Caco-2 (cell line): ENCODE measurements at regions of chr14 and their contacts with region 1.

Region 1: GRCh38 chr14:22955702-22956569 is 954 bp downstream of the HAUS4 start:
- DNase-seq: no peak
- H3K4me3 ChIP-seq: peak overlapping the region; percentile 58
- H3K4me3 Mint-ChIP-seq: peak overlapping the region; percentile 94
- H3K27ac Mint-ChIP-seq: peak overlapping the region; percentile 96
- H3K4me1 ChIP-seq: peaks cover 18% of the 10 kb centered on the region; the same call in 1 of the 2 replicates
- H3K4me1 Mint-ChIP-seq: peaks cover 25% of the 10 kb centered on the region
- H3K27me3 ChIP-seq: no peaks in the 10 kb centered on the region
- H3K27me3 Mint-ChIP-seq: no peaks in the 10 kb centered on the region
- CTCF ChIP-seq: no peak

Region 2: DNA sequence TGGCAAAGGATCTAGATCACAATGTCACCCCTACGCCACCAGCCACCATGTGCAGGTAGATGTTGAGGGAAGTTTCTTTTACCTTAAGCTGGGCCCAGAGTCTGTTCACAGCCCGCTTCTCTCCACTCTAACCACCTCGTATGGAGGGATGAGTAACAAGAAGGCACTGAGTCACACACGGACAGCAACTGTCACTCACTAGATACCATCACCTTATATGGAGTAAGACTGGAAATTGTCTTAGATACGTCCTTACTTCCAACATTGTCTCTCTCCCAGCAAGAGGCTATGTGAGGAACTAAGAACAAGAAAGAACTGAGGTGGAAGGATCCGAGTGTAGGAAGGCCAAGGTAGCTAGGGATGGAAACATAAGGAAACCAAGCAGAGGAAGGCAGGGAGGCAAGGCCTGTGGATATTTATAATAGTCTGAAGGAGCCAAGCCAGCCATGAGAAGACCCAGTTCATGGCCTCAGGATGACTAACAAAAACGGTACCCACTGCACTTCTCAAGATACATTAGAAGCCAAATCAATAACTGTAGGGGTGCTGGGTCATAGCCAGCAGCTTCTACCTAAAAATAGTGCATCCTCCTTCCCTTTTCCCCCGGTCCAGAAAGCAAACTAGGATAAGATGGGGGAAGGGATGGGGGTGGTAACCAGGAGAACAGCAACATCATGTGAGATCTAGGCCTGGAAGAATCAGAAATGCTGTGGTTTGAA is 57.4 kb before region 1 on chr14:
- CTCF ChIA-PET with region 1: no interaction called
- POLR2A ChIA-PET with region 1: no interaction called
- intact Hi-C with region 1: no loop called
- DNase-seq: no peak
- H3K4me3 ChIP-seq: no peak overlapping the region
- H3K4me3 Mint-ChIP-seq: no peak overlapping the region
- H3K27ac Mint-ChIP-seq: no peak overlapping the region
- H3K4me1 ChIP-seq: 0 out of 2 replicates have a peak, but pooled peaks cover 7% of the 10 kb centered on the region
- H3K4me1 Mint-ChIP-seq: no peaks in the 10 kb centered on the region
- H3K27me3 ChIP-seq: no peaks in the 10 kb centered on the region
- H3K27me3 Mint-ChIP-seq: no peaks in the 10 kb centered on the region
- CTCF ChIP-seq: no peak

Region 3: DNA sequence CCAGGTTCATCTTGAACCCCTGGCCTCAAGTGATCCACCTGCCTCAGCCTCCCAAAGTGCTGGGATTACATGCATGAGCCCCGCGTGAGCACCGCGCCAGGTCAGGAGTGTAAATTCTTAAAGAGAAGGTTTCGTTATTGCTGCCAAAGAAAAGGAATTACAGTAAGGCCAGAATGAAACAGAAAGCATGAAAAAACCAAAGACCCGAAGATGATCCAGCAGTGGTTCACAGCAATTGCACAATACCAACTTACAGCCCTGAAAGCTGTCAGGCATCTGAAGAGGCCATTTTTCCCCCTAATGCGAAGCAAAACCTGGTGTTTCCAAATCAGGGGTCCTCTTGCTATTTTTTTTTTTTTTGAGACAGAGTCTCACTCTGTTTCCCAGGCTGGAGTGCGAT is 47.3 kb before region 1 on chr14:
- CTCF ChIA-PET with region 1: no interaction called
- POLR2A ChIA-PET with region 1: no interaction called
- intact Hi-C with region 1: no loop called
- DNase-seq: no peak
- H3K4me3 ChIP-seq: no peak overlapping the region
- H3K4me3 Mint-ChIP-seq: no peak overlapping the region
- H3K27ac Mint-ChIP-seq: no peak overlapping the region
- H3K4me1 ChIP-seq: no peaks in the 10 kb centered on the region
- H3K4me1 Mint-ChIP-seq: no peaks in the 10 kb centered on the region
- H3K27me3 ChIP-seq: no peaks in the 10 kb centered on the region
- H3K27me3 Mint-ChIP-seq: no peaks in the 10 kb centered on the region
- CTCF ChIP-seq: no peak

Region 4: DNA sequence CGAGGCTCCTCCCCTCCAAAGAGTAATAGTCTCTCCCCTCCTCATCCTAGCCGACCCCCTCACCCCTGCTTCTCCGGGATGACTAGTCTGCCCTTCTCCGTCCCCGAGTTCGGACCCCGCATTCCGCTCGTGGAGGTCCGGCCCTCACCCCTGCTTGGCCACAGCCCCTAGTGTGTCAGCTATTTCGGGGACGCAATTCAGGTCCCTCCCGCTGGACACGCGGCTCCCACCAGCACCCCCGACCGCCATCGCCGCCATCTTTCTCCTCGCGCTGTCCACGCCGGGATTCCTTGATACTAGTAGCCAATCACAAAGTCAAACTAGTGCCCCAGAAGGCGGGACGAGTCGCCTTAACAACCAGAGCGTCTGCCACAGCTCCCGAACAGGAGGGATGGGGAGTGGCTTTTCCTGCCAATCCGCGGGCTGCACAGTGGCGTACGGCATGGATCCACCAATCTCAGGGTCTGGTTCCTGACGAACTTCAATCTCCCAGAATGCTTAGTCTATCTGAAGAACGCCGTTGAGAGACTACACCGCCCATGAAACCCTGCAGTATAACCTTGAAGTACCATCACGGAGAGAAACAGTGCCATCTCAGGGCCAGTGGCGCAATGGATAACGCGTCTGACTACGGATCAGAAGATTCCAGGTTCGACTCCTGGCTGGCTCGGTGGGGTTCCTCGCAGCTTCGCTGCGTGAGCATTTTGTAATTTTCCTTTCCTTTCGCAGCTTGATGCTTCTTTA is 26.7 kb before region 1 on chr14 and contains the start of gene PRMT5:
- CTCF ChIA-PET with region 1: interaction called, 19 read pairs
- POLR2A ChIA-PET with region 1: interaction called, 21 read pairs
- intact Hi-C with region 1: loop called (anchors 1 kb)
- DNase-seq: peak; percentile 98 to 100
- H3K4me3 ChIP-seq: peak within 1 kb of the TSS; percentile 89
- H3K4me3 Mint-ChIP-seq: no peak within 1 kb of the TSS
- H3K27ac Mint-ChIP-seq: no peak within 1 kb of the TSS
- H3K4me1 ChIP-seq: peaks cover 14% of the 10 kb centered on the region; the same call in 1 of the 2 replicates
- H3K4me1 Mint-ChIP-seq: peaks cover 26% of the 10 kb centered on the region
- H3K27me3 ChIP-seq: no peaks in the 10 kb centered on the region
- H3K27me3 Mint-ChIP-seq: no peaks in the 10 kb centered on the region
- CTCF ChIP-seq: no peak
- total RNA-seq, gene PRMT5: 107 and 111 TPM in 2 replicates

Region 5: DNA sequence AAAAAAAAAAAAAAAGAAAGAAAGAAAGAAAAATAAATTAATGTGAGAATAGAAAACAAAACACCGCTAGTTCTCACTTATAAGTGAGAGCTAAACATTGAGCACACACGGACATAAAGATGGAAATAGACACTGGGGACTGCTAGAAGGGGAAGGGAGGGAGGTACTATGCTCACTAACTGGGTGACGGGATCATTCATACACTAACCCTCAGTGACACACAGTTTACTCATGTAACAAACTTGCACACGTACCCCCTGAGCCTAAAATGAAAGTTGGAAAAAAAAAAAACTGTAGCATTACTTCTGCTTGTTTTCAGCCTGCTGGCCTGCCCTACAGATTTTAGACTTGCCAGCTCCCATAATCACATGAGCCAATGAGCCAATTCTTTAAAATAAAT is 16.3 kb before region 1 on chr14:
- CTCF ChIA-PET with region 1: interaction called, 3 read pairs
- POLR2A ChIA-PET with region 1: interaction called, 3 read pairs
- intact Hi-C with region 1: loop called (anchors 2 kb)
- DNase-seq: no peak
- H3K4me3 ChIP-seq: no peak overlapping the region
- H3K4me3 Mint-ChIP-seq: no peak overlapping the region
- H3K27ac Mint-ChIP-seq: no peak overlapping the region
- H3K4me1 ChIP-seq: no peaks in the 10 kb centered on the region
- H3K4me1 Mint-ChIP-seq: no peaks in the 10 kb centered on the region
- H3K27me3 ChIP-seq: no peaks in the 10 kb centered on the region
- H3K27me3 Mint-ChIP-seq: no peaks in the 10 kb centered on the region
- CTCF ChIP-seq: no peak

Region 6: DNA sequence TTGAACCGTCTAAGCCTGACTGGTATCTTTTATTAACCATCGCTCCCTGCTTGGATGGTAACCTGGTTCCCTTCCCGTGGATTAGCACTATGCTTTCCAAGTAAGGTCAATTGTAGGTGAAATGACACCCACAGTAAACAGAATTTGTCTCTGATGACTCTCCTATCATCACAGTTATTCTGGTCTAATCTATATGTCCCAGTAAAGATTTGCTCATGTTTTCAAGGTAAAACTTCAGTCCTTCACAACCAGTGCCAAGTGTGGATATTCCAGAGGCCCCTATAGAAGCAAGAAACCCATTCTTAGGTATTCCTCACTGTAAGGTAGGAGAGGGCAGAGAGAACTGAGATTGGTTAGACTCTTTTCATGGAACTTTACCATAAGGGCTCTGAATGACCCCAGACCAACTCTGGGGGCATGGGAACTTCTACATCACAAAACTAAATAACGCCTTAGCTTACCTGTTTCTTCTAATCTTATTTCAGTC is 10.9 kb after region 1 on chr14:
- CTCF ChIA-PET with region 1: no interaction called
- POLR2A ChIA-PET with region 1: interaction called, 19 read pairs
- intact Hi-C with region 1: no loop called
- DNase-seq: no peak
- H3K4me3 ChIP-seq: no peak overlapping the region
- H3K4me3 Mint-ChIP-seq: no peak overlapping the region
- H3K27ac Mint-ChIP-seq: peak overlapping the region; percentile 68
- H3K4me1 ChIP-seq: peaks cover 20% of the 10 kb centered on the region
- H3K4me1 Mint-ChIP-seq: peaks cover under 1% of the 10 kb centered on the region
- H3K27me3 ChIP-seq: no peaks in the 10 kb centered on the region
- H3K27me3 Mint-ChIP-seq: no peaks in the 10 kb centered on the region
- CTCF ChIP-seq: no peak

Region 7: DNA sequence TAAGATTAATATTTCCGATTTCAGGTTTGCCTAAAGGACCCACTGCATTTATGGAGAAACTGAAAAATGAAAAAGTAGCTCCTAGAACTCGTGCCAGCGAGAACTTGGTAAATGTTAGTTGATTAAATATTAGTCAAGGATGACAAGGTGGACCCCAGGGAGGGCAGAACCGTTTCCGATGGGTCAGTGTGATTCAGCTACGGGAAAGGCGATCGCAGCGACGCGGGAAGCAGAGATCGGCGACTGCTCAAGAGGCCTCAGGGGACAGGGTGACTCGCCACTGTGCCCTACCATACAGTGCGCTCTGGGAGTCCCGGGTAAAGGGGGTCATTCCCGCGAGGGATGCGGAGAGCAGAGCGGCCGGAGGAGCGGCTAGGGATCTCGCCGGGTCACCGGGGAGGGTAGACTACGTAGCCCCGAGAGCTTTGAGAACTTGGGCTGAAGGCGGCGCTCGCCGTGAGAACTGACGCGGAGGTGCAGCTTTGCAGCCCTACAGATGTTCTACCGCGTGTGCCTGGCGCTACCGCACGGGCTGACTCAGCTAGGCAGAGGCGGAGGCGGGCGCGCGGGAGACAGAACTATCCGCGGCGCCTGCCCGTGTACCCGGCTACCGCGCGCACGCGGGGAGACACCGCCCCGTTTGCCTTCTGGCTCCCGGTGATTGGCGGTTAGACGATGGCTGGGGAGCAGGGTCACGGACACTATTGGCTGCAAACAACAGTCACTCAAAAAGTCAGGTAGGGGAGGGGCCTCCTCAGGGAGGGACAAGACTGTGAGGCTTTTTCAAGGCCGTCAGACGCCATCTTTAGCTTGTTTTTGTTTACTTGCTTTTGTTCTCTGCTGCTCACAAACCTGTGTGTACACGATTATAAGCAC is 50.8 kb after region 1 on chr14:
- CTCF ChIA-PET with region 1: no interaction called
- POLR2A ChIA-PET with region 1: interaction called, 11 read pairs
- intact Hi-C with region 1: no loop called
- DNase-seq: peak; percentile 97
- H3K4me3 ChIP-seq: peak overlapping the region; percentile 63
- H3K4me3 Mint-ChIP-seq: peak overlapping the region; percentile 100
- H3K27ac Mint-ChIP-seq: peak overlapping the region; percentile 99
- H3K4me1 ChIP-seq: peaks cover 14% of the 10 kb centered on the region
- H3K4me1 Mint-ChIP-seq: peaks cover 15% of the 10 kb centered on the region
- H3K27me3 ChIP-seq: no peaks in the 10 kb centered on the region
- H3K27me3 Mint-ChIP-seq: no peaks in the 10 kb centered on the region
- CTCF ChIP-seq: peak; percentile 13 to 44